H1 (cell line): ENCODE measurements at regions of chr7 and their contacts with region 1.

Region 1: GRCh38 chr7:142880876-142881505 is 4.6 kb downstream of the TRPV6 start:
- DNase-seq: peak; percentile 23 to 78
- H3K4me3 ChIP-seq: no peak overlapping the region
- H3K27ac ChIP-seq: no peak overlapping the region
- H3K4me1 ChIP-seq: peaks cover 0 to 8% (median 2%) of the 10 kb centered on the region in 4 experiments; a peak in 2 of 7 replicates
- H3K27me3 ChIP-seq: 0 out of 7 replicates have a peak, but pooled peaks cover 0 to 2% (median 0%) of the 10 kb centered on the region in 4 experiments
- CTCF ChIP-seq: peak; percentile 83 to 96 (median 95)
- EP300 ChIP-seq: no peak
- POLR2A ChIP-seq: no peak
- RAD21 ChIP-seq: peak; percentile 77 to 84

Region 2: GRCh38 chr7:142632291-142633134 is 248.5 kb before region 1 on chr7:
- CTCF ChIA-PET with region 1: interaction called, 11 read pairs
- POLR2A ChIA-PET with region 1: no interaction called
- DNase-seq: peak; percentile 43 to 81
- H3K4me3 ChIP-seq: no peak overlapping the region
- H3K27ac ChIP-seq: no peak overlapping the region
- H3K4me1 ChIP-seq: no peaks in the 10 kb centered on the region
- H3K27me3 ChIP-seq: no peaks in the 10 kb centered on the region
- CTCF ChIP-seq: peak; percentile 59 to 90 (median 72)
- EP300 ChIP-seq: no peak
- POLR2A ChIP-seq: no peak
- RAD21 ChIP-seq: peak; percentile 87 to 92

Region 3: GRCh38 chr7:142853739-142854371 is 27.1 kb before region 1 on chr7:
- CTCF ChIA-PET with region 1: interaction called, 87 read pairs
- POLR2A ChIA-PET with region 1: interaction called, 3 read pairs
- DNase-seq: peak; percentile 49 to 72
- H3K4me3 ChIP-seq: peak overlapping the region; percentile 83 to 97 (median 92)
- H3K27ac ChIP-seq: no peak overlapping the region
- H3K4me1 ChIP-seq: peaks cover 0 to 12% (median 4%) of the 10 kb centered on the region in 4 experiments; a peak in 4 of 7 replicates
- H3K27me3 ChIP-seq: peaks cover 0 to 12% (median 6%) of the 10 kb centered on the region in 4 experiments; a peak in 4 of 7 replicates
- CTCF ChIP-seq: peak; percentile 68 to 84 (median 79)
- EP300 ChIP-seq: no peak
- POLR2A ChIP-seq: no peak
- RAD21 ChIP-seq: peak; percentile 77 to 87

Region 4: GRCh38 chr7:142898377-142899170 is 17.6 kb after region 1 on chr7:
- CTCF ChIA-PET with region 1: interaction called, 69 read pairs
- POLR2A ChIA-PET with region 1: interaction called, 4 read pairs
- DNase-seq: peak in 1 of 2 experiments; percentile 17
- H3K4me3 ChIP-seq: no peak overlapping the region
- H3K27ac ChIP-seq: no peak overlapping the region
- H3K4me1 ChIP-seq: peaks cover 0 to 3% (median 0%) of the 10 kb centered on the region in 4 experiments; a peak in 1 of 7 replicates
- H3K27me3 ChIP-seq: no peaks in the 10 kb centered on the region; a peak in 1 of 7 replicates
- CTCF ChIP-seq: no peak
- EP300 ChIP-seq: no peak
- POLR2A ChIP-seq: no peak
- RAD21 ChIP-seq: no peak

Region 5: GRCh38 chr7:142916508-142916907 is 35.5 kb after region 1 on chr7:
- CTCF ChIA-PET with region 1: interaction called, 32 read pairs
- POLR2A ChIA-PET with region 1: no interaction called
- DNase-seq: no peak
- H3K4me3 ChIP-seq: no peak overlapping the region
- H3K27ac ChIP-seq: no peak overlapping the region
- H3K4me1 ChIP-seq: no peaks in the 10 kb centered on the region
- H3K27me3 ChIP-seq: no peaks in the 10 kb centered on the region
- CTCF ChIP-seq: no peak
- EP300 ChIP-seq: no peak
- POLR2A ChIP-seq: no peak
- RAD21 ChIP-seq: no peak

Region 6: DNA sequence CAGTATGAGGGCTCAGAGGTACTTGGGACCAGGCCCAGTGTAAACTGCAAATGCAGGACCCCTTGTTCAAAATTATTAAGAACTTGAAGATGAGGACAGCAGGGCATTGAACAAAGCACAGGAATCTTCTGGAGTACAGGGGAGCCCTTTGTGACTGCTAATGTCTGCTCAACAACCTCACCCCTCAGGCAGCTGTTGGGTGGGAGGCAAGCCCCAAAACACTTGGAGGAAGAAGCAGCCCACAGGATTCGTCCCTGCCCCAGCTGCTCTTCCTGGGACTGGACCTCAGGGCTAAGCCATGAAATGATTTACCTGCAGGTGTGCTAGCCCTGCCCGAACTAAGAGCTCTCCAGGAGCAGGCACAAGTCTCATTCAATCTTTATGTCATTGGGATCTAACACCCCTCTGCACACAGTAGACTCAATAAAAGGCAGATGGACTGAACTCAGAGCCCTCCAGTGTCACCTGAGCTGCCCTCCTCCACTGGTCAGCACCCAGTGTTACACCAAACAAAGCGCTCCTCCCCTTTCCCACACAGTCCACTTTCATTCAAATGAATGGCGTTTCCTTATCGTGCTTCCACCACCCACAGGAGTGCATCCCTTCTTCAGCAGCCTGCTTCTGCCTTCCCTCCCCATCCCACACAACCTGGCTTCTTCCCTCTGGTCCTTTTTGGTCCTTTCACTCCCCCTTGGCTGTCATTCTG is 51.5 kb after region 1 on chr7:
- CTCF ChIA-PET with region 1: interaction called, 13 read pairs
- POLR2A ChIA-PET with region 1: no interaction called
- DNase-seq: no peak
- H3K4me3 ChIP-seq: no peak overlapping the region
- H3K27ac ChIP-seq: no peak overlapping the region
- H3K4me1 ChIP-seq: peaks cover 0 to 5% (median 2%) of the 10 kb centered on the region in 4 experiments; a peak in 3 of 7 replicates
- H3K27me3 ChIP-seq: no peaks in the 10 kb centered on the region; a peak in 2 of 7 replicates
- CTCF ChIP-seq: no peak
- EP300 ChIP-seq: no peak
- POLR2A ChIP-seq: no peak
- RAD21 ChIP-seq: no peak

Region 7: GRCh38 chr7:143104832-143105241 is 223.8 kb after region 1 on chr7:
- CTCF ChIA-PET with region 1: no interaction called
- POLR2A ChIA-PET with region 1: no interaction called
- DNase-seq: no peak
- H3K4me3 ChIP-seq: no peak overlapping the region
- H3K27ac ChIP-seq: no peak overlapping the region
- H3K4me1 ChIP-seq: no peaks in the 10 kb centered on the region
- H3K27me3 ChIP-seq: no peaks in the 10 kb centered on the region
- CTCF ChIP-seq: no peak
- EP300 ChIP-seq: no peak
- POLR2A ChIP-seq: no peak
- RAD21 ChIP-seq: no peak